ENCODE measurements at regions of chr12 and their contacts with region 1.

Region 1: DNA sequence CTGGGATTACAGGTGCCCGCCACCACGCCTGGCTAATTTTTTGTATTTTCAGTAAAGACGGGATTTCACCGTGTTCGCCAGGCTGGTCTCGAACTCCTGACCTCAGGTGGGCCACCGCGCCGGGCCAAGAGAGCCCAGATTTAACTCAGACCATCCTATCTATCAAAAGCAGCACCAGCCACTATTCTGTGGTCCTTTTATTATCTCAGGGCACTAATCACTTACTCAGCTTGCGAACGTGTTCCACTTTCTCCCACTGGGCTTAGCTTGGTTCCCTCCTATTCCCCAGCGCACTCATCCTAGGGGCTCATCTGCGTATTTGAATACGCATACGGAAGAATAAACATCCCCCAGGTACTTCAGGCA is 16.2 kb upstream of the AACS start:
- DNase-seq: no peak
- ATAC-seq: no peak; the same call in 2 of the 3 replicates
- H3K4me3 ChIP-seq: peak overlapping the region; percentile 41; the same call in 1 of the 2 replicates
- H3K27ac ChIP-seq: no peak overlapping the region
- H3K4me1 ChIP-seq: no peaks in the 10 kb centered on the region
- H3K27me3 ChIP-seq: no peaks in the 10 kb centered on the region
- CTCF ChIP-seq: no peak
- EP300 ChIP-seq: no peak
- POLR2A ChIP-seq: no peak
- RAD21 ChIP-seq: no peak

Region 2: DNA sequence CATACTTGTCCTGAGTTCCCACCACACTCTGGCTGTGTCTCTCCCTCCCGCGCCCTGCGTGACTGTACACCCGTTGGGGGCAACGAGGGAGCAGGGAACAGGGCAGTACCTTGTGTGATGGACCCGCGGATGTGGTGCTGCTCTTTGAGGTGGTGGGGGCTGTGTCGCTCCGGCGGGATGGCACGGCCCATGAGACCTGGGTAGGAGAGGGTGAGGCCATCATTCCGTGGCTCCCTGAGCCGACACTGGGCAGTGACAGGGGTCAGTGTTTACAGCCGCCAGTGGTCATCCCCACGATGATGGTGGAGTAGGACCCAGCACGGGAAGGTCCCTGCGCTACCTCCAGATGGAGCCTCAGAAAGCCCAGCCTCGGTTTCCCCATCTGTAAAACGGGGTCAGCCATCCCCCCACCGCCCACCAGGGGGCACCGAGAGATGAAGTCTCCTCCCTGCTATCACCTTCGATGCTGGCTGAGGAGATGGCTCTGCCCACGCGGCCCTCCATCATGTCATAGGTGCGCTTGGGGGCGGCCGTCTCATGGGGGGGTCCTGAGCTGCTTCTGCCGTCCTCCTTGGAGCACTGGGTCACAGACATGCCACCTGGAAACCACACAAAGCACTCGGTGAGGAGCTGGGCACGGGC is 701.2 kb before region 1 on chr12:
- CTCF ChIA-PET with region 1: no interaction called
- POLR2A ChIA-PET with region 1: no interaction called
- RAD21 ChIA-PET with region 1: no interaction called
- SMC1A ChIA-PET with region 1: no interaction called
- in situ Hi-C with region 1: no loop called
- intact Hi-C with region 1: no loop called
- DNase-seq: no peak
- ATAC-seq: peak; percentile 21; the same call in 1 of the 3 replicates
- H3K4me3 ChIP-seq: no peak overlapping the region
- H3K27ac ChIP-seq: no peak overlapping the region
- H3K4me1 ChIP-seq: no peaks in the 10 kb centered on the region
- H3K27me3 ChIP-seq: no peaks in the 10 kb centered on the region
- CTCF ChIP-seq: peak; percentile 40 to 51 (median 48); a peak in 5 of 6 replicates
- EP300 ChIP-seq: no peak
- POLR2A ChIP-seq: no peak
- RAD21 ChIP-seq: peak; percentile 44

Region 3: DNA sequence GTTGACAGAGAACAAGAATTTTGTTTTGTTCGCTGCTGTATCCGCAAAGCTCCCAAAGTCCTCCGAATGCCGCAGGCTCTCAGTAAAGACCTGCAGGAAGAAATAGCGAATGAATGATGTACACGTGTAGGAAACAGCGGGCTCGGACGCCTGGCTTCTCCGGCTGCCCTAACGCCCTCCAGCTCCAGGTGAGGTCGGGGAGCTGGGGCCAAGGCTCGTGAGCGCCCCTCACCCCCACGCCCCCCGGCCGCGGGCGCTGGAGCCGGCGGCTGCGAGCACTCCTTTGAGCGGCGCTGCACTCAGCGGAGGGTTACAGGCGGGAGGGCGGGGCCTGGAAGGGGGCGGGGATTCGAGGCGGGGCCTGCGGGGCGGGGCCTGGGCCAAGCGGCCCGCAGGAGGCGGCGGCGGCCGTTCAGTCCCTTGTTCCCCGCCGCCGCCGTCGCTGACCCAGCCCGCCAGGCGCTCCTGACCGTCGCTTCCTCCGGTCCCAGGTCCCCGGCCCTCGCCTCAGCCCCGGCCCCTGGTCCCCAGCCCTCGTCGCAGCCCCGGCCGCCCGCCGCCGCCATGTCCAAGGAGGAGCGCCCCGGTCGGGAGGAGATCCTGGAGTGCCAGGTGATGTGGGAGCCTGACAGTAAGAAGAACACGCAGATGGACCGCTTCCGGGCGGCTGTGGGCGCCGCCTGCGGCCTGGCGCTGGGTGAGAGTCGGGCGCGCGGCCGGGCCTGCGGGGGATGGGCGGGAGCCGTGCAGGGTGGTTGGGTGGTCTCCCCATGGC is 16.1 kb after region 1 on chr12 and contains the start of gene AACS:
- CTCF ChIA-PET with region 1: no interaction called
- POLR2A ChIA-PET with region 1: interaction called, 3 read pairs
- RAD21 ChIA-PET with region 1: no interaction called
- SMC1A ChIA-PET with region 1: interaction called, 3 read pairs
- in situ Hi-C with region 1: no loop called
- intact Hi-C with region 1: loop called (anchors 1 kb)
- DNase-seq: no peak
- ATAC-seq: peak; percentile 97
- H3K4me3 ChIP-seq: peak within 1 kb of the TSS; percentile 94
- H3K27ac ChIP-seq: peak within 1 kb of the TSS; percentile 54
- H3K4me1 ChIP-seq: no peaks in the 10 kb centered on the region; the same call in 1 of the 2 replicates
- H3K27me3 ChIP-seq: peaks cover 0 to 2% of the 10 kb centered on the region in 2 experiments; a peak in 1 of 4 replicates
- CTCF ChIP-seq: 0 out of 6 replicates have a peak, but pooled peaks of 1 of the 3 experiments have one; percentile 8
- EP300 ChIP-seq: no peak
- POLR2A ChIP-seq: peak; percentile 90
- RAD21 ChIP-seq: no peak
- polyA plus RNA-seq, gene AACS: 10.1 to 13.6 TPM